Activated T-helper 1 cell treated with anti-CD3 and anti-CD28 coated beads, Interleukin-12 subunit alpha, Interleukin-12 subunit beta, Interleukin-2, Interleukin-4 antibody, amounts not matched to agents 30 ng/mL and 10 ng/mL and 1 ng/mL, durations not matched to agents 14 hours and 24 hours and 36 hours (primary cell): ENCODE measurements at regions of chr10 and their contacts with region 1.

Region 1: DNA sequence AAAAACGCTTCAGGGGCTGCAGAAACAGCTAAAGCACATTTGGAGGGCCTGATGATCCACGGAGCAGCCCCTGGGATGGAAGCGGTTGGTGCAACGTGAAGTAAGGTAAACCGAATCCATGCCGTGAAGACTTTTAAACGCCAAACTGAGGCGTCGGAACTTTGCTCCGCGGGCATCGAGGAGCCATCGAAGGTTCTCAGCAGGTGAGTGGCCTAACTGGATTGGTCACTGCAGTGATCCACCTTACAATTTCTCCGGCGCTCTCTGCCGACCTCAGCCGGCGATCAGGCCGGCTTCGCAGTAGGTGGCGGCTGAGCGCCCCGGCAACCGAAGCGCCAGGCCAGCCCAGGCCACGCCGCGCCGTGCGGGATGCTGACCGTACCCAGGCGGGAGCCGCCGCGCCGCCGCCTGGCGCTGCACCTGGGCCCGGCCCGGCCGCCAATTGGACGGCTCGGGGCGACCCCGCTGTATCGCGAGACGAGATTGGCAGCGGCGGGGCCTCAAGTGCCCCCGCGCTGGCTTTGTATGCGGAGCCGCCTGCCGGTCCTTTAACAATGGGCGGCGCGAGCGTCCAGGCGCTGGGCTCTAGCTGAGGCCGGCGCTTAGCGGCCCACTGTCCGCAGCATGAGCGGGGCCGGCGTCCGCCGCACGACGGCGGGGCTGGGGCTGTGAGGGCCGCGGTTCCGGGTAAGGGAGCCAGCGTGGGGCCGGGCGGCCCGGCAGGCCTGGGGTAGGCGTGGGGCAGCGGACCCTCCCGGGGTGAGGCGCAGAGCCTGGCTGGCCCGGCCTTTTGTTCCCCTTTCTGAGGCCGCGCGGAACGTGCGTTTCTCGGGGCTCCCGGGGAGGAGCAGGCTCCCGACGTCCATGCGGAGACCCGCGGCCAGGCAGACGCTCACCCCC is at the start of gene CCNJ:
- DNase-seq: peak; percentile 79
- H3K4me3 Mint-ChIP-seq: peak within 1 kb of the TSS; percentile 92
- H3K27ac Mint-ChIP-seq: peak within 1 kb of the TSS; percentile 83
- H3K4me1 Mint-ChIP-seq: peaks cover 42% of the 10 kb centered on the region
- H3K27me3 Mint-ChIP-seq: peaks cover 2% of the 10 kb centered on the region
- total RNA-seq, gene CCNJ: 9.7 and 10.2 TPM in 2 replicates

Region 2: GRCh38 chr10:95907456-95908253 is 135.6 kb before region 1 on chr10 and contains the start of gene CC2D2B:
- intact Hi-C with region 1: loop called (anchors 1 kb)
- DNase-seq: peak; percentile 59
- H3K4me3 Mint-ChIP-seq: peak within 1 kb of the TSS; percentile 92
- H3K27ac Mint-ChIP-seq: peak within 1 kb of the TSS; percentile 91
- H3K4me1 Mint-ChIP-seq: peaks cover 16% of the 10 kb centered on the region
- H3K27me3 Mint-ChIP-seq: peaks cover 16% of the 10 kb centered on the region
- total RNA-seq, gene CC2D2B: 0.60 and 0.96 TPM in 2 replicates

Region 3: GRCh38 chr10:96073722-96074121 is 30.4 kb after region 1 on chr10:
- intact Hi-C with region 1: loop called (anchors 1 kb)
- DNase-seq: peak; percentile 8
- H3K4me3 Mint-ChIP-seq: peak overlapping the region; percentile 2
- H3K27ac Mint-ChIP-seq: peak overlapping the region; percentile 7
- H3K4me1 Mint-ChIP-seq: peaks cover 35% of the 10 kb centered on the region
- H3K27me3 Mint-ChIP-seq: no peaks in the 10 kb centered on the region

Region 4: DNA sequence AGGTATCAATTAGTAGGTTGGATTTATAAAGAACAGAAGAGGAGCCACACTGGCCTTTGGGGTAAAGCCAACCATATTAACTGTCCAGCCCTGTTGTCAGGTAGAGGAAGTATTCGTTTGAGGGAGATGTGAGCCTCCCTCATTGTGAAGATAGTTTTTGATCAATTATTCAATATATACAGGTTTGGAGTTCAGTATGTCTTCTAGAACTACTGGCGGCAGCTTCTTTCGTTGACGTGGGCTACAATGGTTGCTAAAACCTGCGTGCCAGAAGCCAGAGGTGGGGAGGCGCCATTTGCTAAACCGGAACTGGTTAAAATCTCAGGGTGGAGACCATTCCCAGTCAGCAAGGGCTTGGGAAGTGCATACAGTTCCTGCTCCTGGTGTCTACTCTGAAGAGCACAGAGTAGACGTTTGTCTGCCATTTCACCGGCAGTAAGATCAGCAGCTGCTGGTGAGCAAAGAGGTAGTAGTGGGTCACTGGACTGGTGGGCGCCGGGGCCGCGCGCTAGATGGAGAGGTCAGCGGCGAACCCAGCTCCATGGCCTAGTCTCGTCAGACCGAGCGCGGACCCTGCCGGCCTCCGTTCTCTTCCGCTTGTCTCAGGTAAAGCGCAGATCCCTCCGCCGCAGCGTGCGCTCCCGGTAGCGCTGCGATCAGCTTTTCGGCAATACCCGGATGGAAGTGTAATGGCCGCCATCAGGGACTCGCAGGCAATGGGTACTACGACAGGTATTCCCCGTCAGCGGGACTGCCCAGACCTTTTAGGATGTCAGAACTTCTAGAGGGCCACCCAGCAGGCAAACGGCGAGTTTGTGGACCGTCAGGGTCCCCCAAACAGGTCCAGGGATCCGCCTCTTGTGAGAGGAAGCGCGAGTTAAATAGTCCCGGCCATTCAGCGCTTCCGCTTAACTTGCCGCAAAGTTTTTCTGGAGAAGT is 86.4 kb after region 1 on chr10 and contains the start of gene ZNF518A:
- intact Hi-C with region 1: loop called (anchors 1 kb)
- DNase-seq: peak; percentile 86
- H3K4me3 Mint-ChIP-seq: peak within 1 kb of the TSS; percentile 90
- H3K27ac Mint-ChIP-seq: peak within 1 kb of the TSS; percentile 99
- H3K4me1 Mint-ChIP-seq: peaks cover 33% of the 10 kb centered on the region
- H3K27me3 Mint-ChIP-seq: peaks cover 27% of the 10 kb centered on the region
- total RNA-seq, gene ZNF518A: 14.3 and 16.2 TPM in 2 replicates